HEK293T (cell line): ENCODE measurements at regions of chr9 and their contacts with region 1.

Region 1: DNA sequence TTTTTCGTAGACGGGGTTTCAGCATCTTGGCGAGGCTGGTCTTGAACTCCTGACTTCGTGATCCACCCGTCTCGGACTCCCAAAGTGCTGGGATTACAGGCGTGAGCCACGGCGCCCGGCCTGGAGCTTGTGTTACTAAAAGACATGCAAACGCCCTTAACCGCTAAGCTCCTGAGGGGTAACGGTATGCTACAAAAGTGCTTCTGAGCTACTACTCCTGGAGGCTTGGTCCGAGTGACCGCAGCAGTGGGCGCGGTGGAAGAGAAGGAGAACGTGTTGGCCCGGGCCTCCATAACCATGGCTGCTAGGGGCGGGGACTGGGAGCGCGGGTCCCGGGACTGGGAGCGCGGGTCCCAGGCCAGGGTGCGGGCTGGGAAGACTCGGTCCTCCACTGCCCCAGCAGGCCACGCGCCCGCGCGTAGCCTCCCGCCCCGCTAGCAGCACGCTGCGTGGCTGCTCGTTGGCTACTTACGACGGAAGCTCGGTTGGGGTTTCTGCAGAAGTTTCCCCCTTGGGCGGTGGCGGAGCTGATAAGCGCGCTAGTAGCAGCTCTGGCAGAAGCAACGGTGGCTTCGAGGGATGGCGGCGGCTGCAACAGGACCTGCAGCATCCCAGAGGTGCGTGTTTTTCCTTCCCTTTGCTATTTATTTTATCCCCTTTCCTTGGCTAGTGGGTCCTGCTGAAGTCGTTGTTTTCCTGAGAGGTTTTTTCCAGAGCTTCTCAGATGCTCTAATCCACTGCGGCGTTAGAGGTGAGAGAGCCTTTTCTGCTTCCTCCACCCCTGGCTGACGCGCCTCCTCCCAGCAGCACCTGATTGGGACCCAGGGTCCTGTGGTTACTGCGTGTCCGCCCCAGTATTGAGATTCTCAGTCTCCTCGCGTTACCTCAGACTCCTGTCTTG is 69.3 kb upstream of the CCDC180 start:
- DNase-seq: peak; percentile 69

Region 2: DNA sequence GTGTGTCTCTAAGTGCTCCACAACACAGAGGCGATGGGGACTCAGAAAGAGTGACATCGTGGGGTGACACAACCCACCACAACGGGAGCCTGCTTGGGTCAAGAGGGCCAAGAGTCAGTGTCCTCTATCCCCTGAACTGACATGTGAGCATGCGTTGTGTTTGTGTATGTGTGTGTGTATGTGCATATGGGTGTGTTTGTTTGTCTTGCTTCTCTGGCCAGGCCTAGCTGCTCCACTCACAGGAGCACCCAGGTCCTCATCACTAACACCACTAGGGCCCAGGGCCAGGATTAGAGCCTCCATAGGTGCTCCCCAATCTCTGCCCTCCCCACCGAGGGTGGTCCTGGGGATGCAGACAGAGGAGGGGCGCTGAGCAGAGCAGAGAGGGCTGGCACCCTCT is 84.2 kb before region 1 on chr9:
- CTCF ChIA-PET with region 1: no interaction called
- POLR2A ChIA-PET with region 1: no interaction called
- DNase-seq: no peak

Region 3: DNA sequence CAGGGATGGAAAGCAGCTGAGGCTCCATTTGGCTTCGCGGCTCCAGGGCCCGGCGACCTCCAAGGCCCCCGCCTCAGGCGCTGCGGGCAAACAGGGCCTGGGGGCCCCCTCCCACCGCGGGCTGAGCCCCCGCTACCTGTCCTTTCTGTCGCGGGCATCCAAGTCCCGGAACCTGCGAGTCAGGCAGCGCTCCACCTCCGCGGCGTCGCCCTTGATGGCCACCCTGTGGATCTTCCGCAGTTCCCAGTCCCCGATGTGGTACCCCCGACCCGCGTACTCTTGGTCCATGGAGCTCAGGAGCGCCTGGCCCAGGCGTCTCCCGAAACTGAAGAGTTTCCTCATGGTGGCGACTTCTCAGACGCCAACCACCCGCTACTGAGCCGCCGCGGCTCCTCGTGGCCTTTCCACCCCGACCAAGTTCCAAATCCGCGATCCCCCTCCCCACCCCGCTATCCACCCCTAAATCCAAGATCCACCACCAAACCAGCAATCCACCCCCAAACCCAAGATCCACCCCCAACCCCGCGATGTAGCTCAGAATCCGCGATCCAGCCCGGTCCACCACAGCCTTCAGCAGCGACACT is 17.2 kb before region 1 on chr9:
- CTCF ChIA-PET with region 1: no interaction called
- POLR2A ChIA-PET with region 1: interaction called, 21 read pairs
- DNase-seq: no peak